ENCODE measurements at regions of chr10 and their contacts with region 1.

Region 1: DNA sequence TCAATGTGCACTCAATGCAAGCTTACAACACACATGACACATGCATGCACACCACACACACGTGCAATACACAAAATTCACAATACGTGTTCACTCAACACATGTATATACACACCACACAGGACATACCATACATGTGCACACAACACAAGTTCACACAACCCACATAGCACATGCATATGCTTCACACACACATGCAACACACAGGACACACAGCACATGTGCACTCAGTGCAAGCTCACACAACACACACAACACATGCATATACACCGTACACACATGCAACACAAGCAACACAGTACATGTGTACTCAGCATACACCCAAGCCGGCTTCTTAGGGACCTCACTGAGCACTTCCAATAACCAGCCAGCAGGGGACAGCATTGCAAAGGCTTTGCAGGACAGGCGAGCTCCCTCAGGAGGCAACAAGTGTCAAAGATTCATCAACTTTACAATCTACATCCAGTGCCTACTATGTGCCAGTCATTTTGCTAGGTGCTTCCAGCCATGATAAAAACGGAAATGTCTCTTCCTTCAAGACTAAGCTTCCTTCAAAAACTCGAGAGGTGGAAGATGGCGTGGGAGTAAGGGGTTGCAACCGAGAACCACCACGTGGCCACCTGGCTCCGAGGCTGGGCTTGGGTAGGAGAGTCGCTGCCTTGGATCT is 61.1 kb downstream of the JCAD start:
- DNase-seq: peak; percentile 61 to 75
- H3K4me3 ChIP-seq: no peak overlapping the region
- H3K27ac ChIP-seq: no peak overlapping the region
- H3K4me1 ChIP-seq: peaks cover 42% of the 10 kb centered on the region
- H3K27me3 ChIP-seq: no peaks in the 10 kb centered on the region
- CTCF ChIP-seq: peak; percentile 92

Region 2: GRCh38 chr10:29658984-29659965 is 339.0 kb before region 1 on chr10:
- CTCF ChIA-PET with region 1: no interaction called
- POLR2A ChIA-PET with region 1: no interaction called
- intact Hi-C with region 1: loop called (anchors 1 kb)
- DNase-seq: peak; percentile 87 to 97
- H3K4me3 ChIP-seq: no peak overlapping the region
- H3K27ac ChIP-seq: peak overlapping the region; percentile 76
- H3K4me1 ChIP-seq: peaks cover 51% of the 10 kb centered on the region
- H3K27me3 ChIP-seq: no peaks in the 10 kb centered on the region
- CTCF ChIP-seq: peak; percentile 45; the same call in 1 of the 2 replicates

Region 3: GRCh38 chr10:29689001-29689400 is 309.3 kb before region 1 on chr10:
- CTCF ChIA-PET with region 1: no interaction called
- POLR2A ChIA-PET with region 1: no interaction called
- intact Hi-C with region 1: no loop called
- DNase-seq: peak in 1 of 2 experiments; percentile 16
- H3K4me3 ChIP-seq: no peak overlapping the region
- H3K27ac ChIP-seq: no peak overlapping the region; the same call in 1 of the 2 replicates
- H3K4me1 ChIP-seq: peaks cover 14% of the 10 kb centered on the region
- H3K27me3 ChIP-seq: no peaks in the 10 kb centered on the region
- CTCF ChIP-seq: no peak

Region 4: GRCh38 chr10:29857843-29858701 is 140.2 kb before region 1 on chr10:
- CTCF ChIA-PET with region 1: no interaction called
- POLR2A ChIA-PET with region 1: no interaction called
- intact Hi-C with region 1: loop called (anchors 1 kb)
- DNase-seq: peak; percentile 79
- H3K4me3 ChIP-seq: no peak overlapping the region
- H3K27ac ChIP-seq: peak overlapping the region; percentile 60
- H3K4me1 ChIP-seq: peaks cover 35% of the 10 kb centered on the region
- H3K27me3 ChIP-seq: no peaks in the 10 kb centered on the region
- CTCF ChIP-seq: peak; percentile 73

Region 5: DNA sequence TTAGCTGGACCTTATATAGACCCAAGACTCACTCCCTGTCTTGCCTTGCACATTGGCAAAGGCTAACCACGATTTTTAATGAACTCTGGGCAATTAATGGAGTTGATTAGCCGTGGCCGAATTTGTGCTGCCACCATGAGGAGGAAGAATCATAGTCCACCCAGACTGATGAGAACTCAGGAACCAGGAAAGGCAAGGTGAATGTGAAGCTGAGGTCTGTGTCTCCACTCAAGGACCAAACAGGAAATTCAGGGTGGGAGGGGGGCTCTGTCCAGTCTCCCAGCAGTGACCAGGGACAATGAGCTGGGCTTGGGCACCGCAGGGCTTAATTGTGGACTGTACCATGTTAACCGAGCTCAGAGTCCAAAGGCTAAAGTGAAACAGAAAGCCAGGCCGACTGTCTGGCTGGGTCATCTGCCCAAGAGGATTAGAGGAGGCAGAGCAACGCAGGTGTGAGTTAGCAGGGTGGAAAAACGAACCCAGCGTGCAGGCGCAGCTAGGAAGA is 188.1 kb after region 1 on chr10:
- CTCF ChIA-PET with region 1: interaction called, 3 read pairs
- POLR2A ChIA-PET with region 1: interaction called, 12 read pairs
- intact Hi-C with region 1: loop called (anchors 5 kb)
- DNase-seq: peak; percentile 35 to 61
- H3K4me3 ChIP-seq: peak overlapping the region; percentile 17; the same call in 1 of the 2 replicates
- H3K27ac ChIP-seq: peak overlapping the region; percentile 49
- H3K4me1 ChIP-seq: peaks cover 55% of the 10 kb centered on the region
- H3K27me3 ChIP-seq: no peaks in the 10 kb centered on the region
- CTCF ChIP-seq: no peak; the same call in 1 of the 2 replicates

Region 6: GRCh38 chr10:30413996-30414576 is 415.8 kb after region 1 on chr10:
- CTCF ChIA-PET with region 1: interaction called, 8 read pairs
- POLR2A ChIA-PET with region 1: interaction called, 37 read pairs
- intact Hi-C with region 1: no loop called
- DNase-seq: peak; percentile 25 to 63
- H3K4me3 ChIP-seq: no peak overlapping the region
- H3K27ac ChIP-seq: no peak overlapping the region
- H3K4me1 ChIP-seq: peaks cover 13% of the 10 kb centered on the region
- H3K27me3 ChIP-seq: no peaks in the 10 kb centered on the region
- CTCF ChIP-seq: peak; percentile 74